Mammary epithelial cell (primary cell): ENCODE measurements at regions of chrX and their contacts with region 1.

Region 1: GRCh38 chrX:8629871-8630270 is 102.1 kb downstream of the ANOS1 start:
- DNase-seq: peak; percentile 75
- H3K4me3 ChIP-seq: no peak overlapping the region
- H3K27ac ChIP-seq: no peak overlapping the region
- H3K4me1 ChIP-seq: peaks cover 4% of the 10 kb centered on the region
- H3K27me3 ChIP-seq: no peaks in the 10 kb centered on the region
- CTCF ChIP-seq: no peak

Region 2: GRCh38 chrX:8027827-8028226 is 602.0 kb before region 1 on chrX:
- CTCF ChIA-PET with region 1: interaction called, 10 read pairs
- dilution Hi-C with region 1: no loop called
- in situ Hi-C with region 1: no loop called
- intact Hi-C with region 1: no loop called
- DNase-seq: no peak
- H3K4me3 ChIP-seq: no peak overlapping the region
- H3K27ac ChIP-seq: no peak overlapping the region
- H3K4me1 ChIP-seq: no peaks in the 10 kb centered on the region
- H3K27me3 ChIP-seq: no peaks in the 10 kb centered on the region
- CTCF ChIP-seq: no peak

Region 3: DNA sequence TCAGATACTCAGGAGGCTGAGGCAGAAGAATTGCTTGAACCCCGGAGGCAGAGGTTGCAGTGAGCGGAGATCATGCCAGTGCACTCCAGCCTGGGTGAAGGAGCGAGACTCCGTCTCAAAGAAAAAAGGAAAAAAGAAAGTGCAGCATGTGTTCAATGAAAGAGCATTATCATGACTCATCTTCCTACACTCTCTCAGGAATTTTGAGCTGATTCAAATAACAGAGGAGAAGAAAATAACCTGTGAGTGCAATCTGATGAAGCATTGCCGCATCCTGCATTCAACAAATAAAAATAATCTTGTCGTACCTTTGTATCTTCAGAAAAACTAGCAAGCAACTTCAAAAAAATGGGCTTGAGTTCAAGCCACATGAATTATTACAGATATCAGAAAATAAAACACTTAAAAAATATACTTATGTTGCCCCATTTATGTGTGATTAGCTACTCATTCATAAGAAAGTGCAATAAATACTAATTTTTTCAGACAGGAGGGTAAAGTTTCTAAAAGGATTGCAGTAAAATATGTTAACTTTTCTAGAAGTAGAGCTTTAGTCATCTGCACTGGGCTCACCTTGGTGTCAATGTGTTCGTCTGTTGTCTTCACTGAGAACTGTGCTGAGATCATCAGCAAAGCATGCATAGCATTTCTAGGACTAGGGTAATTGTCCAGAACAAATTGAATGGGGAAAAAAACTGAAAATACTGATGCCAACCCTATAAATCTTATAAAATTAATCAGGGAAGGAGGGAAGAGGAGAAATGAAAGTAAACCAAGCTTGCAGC is 255.6 kb before region 1 on chrX:
- CTCF ChIA-PET with region 1: no interaction called
- dilution Hi-C with region 1: no loop called
- in situ Hi-C with region 1: no loop called
- intact Hi-C with region 1: no loop called
- DNase-seq: peak; percentile 14
- H3K4me3 ChIP-seq: no peak overlapping the region
- H3K27ac ChIP-seq: no peak overlapping the region
- H3K4me1 ChIP-seq: no peaks in the 10 kb centered on the region
- H3K27me3 ChIP-seq: no peaks in the 10 kb centered on the region
- CTCF ChIP-seq: no peak